IMR-90 (cell line): ENCODE measurements at regions of chr18 and their contacts with region 1.

Region 1: GRCh38 chr18:32175265-32175664 is 14.6 kb upstream of the MEP1B start:
- DNase-seq: no peak
- ATAC-seq: no peak
- H3K4me3 ChIP-seq: no peak overlapping the region
- H3K27ac ChIP-seq: no peak overlapping the region
- H3K4me1 ChIP-seq: no peaks in the 10 kb centered on the region
- H3K27me3 ChIP-seq: no peaks in the 10 kb centered on the region
- CTCF ChIP-seq: no peak
- POLR2A ChIP-seq: no peak
- RAD21 ChIP-seq: no peak

Region 2: GRCh38 chr18:32138332-32138982 is 36.8 kb before region 1 on chr18:
- CTCF ChIA-PET with region 1: no interaction called
- POLR2A ChIA-PET with region 1: no interaction called
- dilution Hi-C with region 1: no loop called
- in situ Hi-C with region 1: no loop called
- intact Hi-C with region 1: no loop called
- DNase-seq: no peak
- ATAC-seq: no peak
- H3K4me3 ChIP-seq: no peak overlapping the region
- H3K27ac ChIP-seq: no peak overlapping the region
- H3K4me1 ChIP-seq: no peaks in the 10 kb centered on the region
- H3K27me3 ChIP-seq: no peaks in the 10 kb centered on the region
- CTCF ChIP-seq: no peak
- POLR2A ChIP-seq: no peak
- RAD21 ChIP-seq: no peak

Region 3: DNA sequence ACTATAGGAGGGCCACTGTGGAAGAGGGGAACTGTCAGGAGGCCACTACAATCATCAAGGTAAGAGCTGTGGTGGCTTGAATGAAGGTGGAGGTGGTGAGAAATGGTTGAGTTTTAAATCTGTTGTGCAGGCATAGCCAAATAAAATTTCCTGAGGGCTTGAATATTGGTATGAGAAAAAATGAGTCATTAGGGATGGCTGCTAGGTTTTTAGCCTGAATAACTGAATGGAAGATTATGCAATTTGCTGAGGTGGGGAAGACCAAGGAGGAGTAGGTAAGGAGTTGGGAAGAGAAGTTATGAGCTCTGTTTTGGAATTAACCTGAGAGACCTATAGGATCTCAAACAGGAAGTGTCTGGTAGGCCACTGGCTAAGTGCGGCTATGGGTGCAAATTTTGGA is 513.6 kb after region 1 on chr18:
- CTCF ChIA-PET with region 1: no interaction called
- POLR2A ChIA-PET with region 1: no interaction called
- dilution Hi-C with region 1: no loop called
- in situ Hi-C with region 1: no loop called
- intact Hi-C with region 1: no loop called
- DNase-seq: no peak
- ATAC-seq: no peak
- H3K4me3 ChIP-seq: no peak overlapping the region
- H3K27ac ChIP-seq: no peak overlapping the region
- H3K4me1 ChIP-seq: no peaks in the 10 kb centered on the region
- H3K27me3 ChIP-seq: no peaks in the 10 kb centered on the region
- CTCF ChIP-seq: no peak
- POLR2A ChIP-seq: no peak
- RAD21 ChIP-seq: no peak

Region 4: DNA sequence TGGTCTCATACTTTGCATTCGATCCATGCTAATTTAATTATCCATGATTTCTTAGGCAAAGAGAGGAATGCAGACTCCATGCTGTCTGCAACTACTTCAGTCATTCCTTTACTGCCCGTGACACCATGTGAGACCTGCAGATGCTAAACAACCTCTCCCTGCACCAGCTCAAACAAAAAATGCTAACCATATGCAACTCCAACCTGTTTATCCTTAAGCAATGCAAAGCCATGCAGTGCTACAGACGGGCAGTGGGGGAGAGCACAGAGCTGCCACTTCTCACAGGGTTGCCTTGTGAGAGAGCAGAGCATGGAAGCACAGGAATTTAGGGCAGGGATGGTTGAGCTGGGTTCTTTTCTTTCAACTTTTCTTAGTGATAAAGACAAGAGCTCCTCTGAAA is 672.4 kb after region 1 on chr18:
- CTCF ChIA-PET with region 1: no interaction called
- POLR2A ChIA-PET with region 1: interaction called, 19 read pairs
- dilution Hi-C with region 1: no loop called
- in situ Hi-C with region 1: no loop called
- intact Hi-C with region 1: no loop called
- DNase-seq: no peak
- ATAC-seq: no peak
- H3K4me3 ChIP-seq: no peak overlapping the region
- H3K27ac ChIP-seq: no peak overlapping the region
- H3K4me1 ChIP-seq: no peaks in the 10 kb centered on the region
- H3K27me3 ChIP-seq: no peaks in the 10 kb centered on the region
- CTCF ChIP-seq: no peak
- POLR2A ChIP-seq: no peak
- RAD21 ChIP-seq: no peak